PC-3 (cell line): ENCODE measurements at regions of chr1 and their contacts with region 1.

Region 1: DNA sequence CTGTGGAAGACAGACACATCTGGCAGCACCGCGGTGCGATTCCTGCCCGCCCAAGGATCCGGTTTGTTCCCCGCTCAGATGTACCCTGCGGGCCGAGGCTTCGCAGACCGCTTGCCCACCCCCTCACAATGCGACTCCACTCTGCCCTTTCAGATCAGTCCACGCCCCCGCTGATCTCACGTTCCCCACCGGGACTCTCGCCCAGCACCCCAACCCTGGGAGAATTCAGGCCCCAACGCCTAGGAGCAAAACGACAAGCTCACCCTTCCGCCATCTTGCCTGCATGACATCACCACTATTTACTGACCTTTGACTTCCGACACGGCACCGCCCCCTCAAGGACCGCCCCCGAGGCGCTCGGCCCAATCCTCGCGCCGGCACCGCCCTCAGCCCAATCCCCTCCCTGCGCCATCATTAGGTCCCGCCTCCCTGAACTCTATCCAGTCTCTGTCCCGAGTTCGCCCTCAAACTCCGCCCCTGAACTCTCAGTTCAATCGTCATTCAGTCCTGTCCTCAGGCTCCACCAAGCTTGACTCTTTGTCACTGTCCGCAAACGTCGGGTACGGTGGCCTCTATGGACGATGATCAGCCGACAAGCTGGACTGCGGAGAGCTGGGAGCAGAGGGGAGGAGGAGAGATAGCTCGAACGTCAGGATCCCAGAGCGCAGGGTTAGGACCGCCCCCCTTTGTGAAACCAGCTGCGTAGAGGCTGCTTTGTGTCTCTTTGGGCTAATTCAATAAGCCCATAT is at the start of gene BSDC1:
- DNase-seq: peak; percentile 99
- ATAC-seq: peak; percentile 94
- H3K4me3 ChIP-seq: peak within 1 kb of the TSS; percentile 87
- H3K27ac ChIP-seq: peak within 1 kb of the TSS; percentile 53
- H3K4me1 ChIP-seq: peaks cover 14% of the 10 kb centered on the region
- H3K27me3 ChIP-seq: no peaks in the 10 kb centered on the region
- CTCF ChIP-seq: no peak
- total RNA-seq, gene BSDC1: 59.8 and 68.5 TPM in 2 replicates

Region 2: DNA sequence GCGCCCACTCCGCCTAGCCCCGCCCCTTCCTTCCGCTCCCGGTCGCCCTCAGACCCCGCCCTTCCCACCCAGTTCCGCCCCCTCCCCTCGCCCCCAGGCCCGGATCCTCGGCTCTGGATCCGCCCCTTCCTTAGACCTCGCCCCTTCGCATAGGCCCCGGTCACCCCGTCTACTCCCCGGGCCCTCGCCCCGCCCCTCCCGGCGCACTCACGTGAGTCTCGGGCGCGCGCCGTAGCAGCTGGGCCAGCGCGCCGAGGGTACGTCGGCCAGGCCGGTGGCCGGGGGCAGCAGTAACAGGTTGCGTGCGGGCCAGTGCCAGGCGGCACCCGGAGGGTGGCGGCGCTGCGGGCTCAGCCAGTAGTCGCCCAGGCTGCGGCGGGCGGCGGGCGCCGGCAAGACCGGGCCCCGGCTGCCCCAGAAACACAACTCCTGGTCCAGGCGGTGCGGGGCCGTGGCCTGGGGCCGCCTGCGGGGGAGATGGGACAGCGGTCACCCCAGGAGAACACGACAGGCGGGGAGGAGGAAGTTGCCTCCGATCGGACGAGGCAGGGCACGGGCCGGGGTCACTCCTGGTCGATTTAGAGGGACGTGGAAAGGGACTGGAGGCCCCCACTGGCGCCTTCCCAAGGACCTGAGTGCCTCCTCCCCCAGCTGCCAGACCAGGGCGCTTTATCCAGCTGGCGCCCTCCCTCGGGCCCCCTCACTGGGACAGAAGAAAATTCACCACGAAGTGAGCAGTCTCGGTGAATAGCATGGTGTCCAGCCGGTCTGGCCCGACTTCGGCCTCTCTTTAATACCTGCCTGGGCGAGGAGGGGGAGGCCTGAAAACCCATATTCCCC is 42.7 kb before region 1 on chr1:
- CTCF ChIA-PET with region 1: no interaction called
- POLR2A ChIA-PET with region 1: no interaction called
- intact Hi-C with region 1: loop called (anchors 1 kb)
- DNase-seq: peak; percentile 91
- ATAC-seq: peak; percentile 92
- H3K4me3 ChIP-seq: peak overlapping the region; percentile 81
- H3K27ac ChIP-seq: peak overlapping the region; percentile 40
- H3K4me1 ChIP-seq: peaks cover 13% of the 10 kb centered on the region
- H3K27me3 ChIP-seq: no peaks in the 10 kb centered on the region
- CTCF ChIP-seq: peak; percentile 19; the same call in 1 of the 2 replicates

Region 3: GRCh38 chr1:32454726-32455125 is 60.4 kb after region 1 on chr1:
- CTCF ChIA-PET with region 1: no interaction called
- POLR2A ChIA-PET with region 1: no interaction called
- intact Hi-C with region 1: no loop called
- DNase-seq: peak; percentile 83
- ATAC-seq: peak; percentile 55
- H3K4me3 ChIP-seq: no peak overlapping the region
- H3K27ac ChIP-seq: no peak overlapping the region
- H3K4me1 ChIP-seq: peaks cover 9% of the 10 kb centered on the region; the same call in 1 of the 2 replicates
- H3K27me3 ChIP-seq: no peaks in the 10 kb centered on the region
- CTCF ChIP-seq: no peak

Region 4: GRCh38 chr1:32611859-32612188 is 217.5 kb after region 1 on chr1:
- CTCF ChIA-PET with region 1: interaction called, 16 read pairs
- POLR2A ChIA-PET with region 1: no interaction called
- intact Hi-C with region 1: no loop called
- DNase-seq: no peak
- ATAC-seq: peak; percentile 53
- H3K4me3 ChIP-seq: peak overlapping the region; percentile 89
- H3K27ac ChIP-seq: no peak overlapping the region
- H3K4me1 ChIP-seq: no peaks in the 10 kb centered on the region; the same call in 1 of the 2 replicates
- H3K27me3 ChIP-seq: no peaks in the 10 kb centered on the region
- CTCF ChIP-seq: no peak

Region 5: GRCh38 chr1:32848354-32849063 is 454.2 kb after region 1 on chr1:
- CTCF ChIA-PET with region 1: no interaction called
- POLR2A ChIA-PET with region 1: no interaction called
- intact Hi-C with region 1: no loop called
- DNase-seq: no peak
- ATAC-seq: no peak
- H3K4me3 ChIP-seq: no peak overlapping the region
- H3K27ac ChIP-seq: no peak overlapping the region
- H3K4me1 ChIP-seq: no peaks in the 10 kb centered on the region
- H3K27me3 ChIP-seq: no peaks in the 10 kb centered on the region
- CTCF ChIP-seq: no peak